Activated CD4-positive, alpha-beta memory T cell treated with anti-CD3 and anti-CD28 coated beads for 36 hours (primary cell): ENCODE measurements at regions of chr15 and their contacts with region 1.

Region 1: GRCh38 chr15:58980351-58980939 is 7.0 kb upstream of the RNF111 start:
- DNase-seq: no peak
- H3K4me3 Mint-ChIP-seq: no peak overlapping the region
- H3K27ac Mint-ChIP-seq: peak overlapping the region; percentile 18
- H3K4me1 Mint-ChIP-seq: peaks cover 36% of the 10 kb centered on the region
- H3K27me3 Mint-ChIP-seq: no peaks in the 10 kb centered on the region

Region 2: GRCh38 chr15:58521293-58521991 is 459.0 kb before region 1 on chr15:
- CTCF ChIA-PET with region 1: no interaction called
- POLR2A ChIA-PET with region 1: no interaction called
- intact Hi-C with region 1: no loop called
- DNase-seq: no peak
- H3K4me3 Mint-ChIP-seq: no peak overlapping the region
- H3K27ac Mint-ChIP-seq: no peak overlapping the region
- H3K4me1 Mint-ChIP-seq: peaks cover 14% of the 10 kb centered on the region
- H3K27me3 Mint-ChIP-seq: no peaks in the 10 kb centered on the region

Region 3: DNA sequence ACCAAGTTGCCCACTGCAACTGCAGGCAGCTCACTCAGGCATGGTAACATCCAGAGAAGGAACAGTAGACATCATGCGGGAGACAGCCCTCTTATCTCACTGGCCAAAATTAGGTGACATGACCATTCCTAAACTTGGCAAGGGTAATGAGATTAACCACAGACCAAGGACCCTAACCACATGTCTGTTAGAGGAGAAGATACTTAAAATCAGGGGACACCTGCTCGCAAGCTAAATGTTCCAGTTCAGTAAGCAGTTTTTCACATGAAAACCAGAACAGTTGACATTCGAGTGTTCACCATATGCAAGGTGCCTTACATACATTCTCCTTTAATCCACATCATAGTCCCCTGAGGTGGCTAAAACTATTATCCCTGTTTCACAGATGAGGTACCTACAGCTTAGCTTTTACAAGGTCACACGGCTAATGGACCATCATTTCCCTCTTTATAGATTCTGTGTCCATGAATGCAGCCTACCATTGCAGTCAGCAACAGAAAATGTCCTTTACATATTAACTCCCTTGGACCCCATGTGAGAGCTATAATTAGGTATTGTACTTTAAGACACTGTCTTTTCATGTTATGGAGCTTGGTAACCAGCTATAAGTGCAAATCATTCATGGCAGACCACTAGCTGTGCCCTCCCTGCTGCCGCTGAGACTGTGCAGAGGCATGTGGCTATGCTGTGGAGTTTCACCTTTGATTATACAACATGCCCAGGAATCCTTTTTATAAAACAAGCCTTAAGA is 394.6 kb before region 1 on chr15:
- CTCF ChIA-PET with region 1: no interaction called
- POLR2A ChIA-PET with region 1: no interaction called
- intact Hi-C with region 1: no loop called
- DNase-seq: no peak
- H3K4me3 Mint-ChIP-seq: no peak overlapping the region
- H3K27ac Mint-ChIP-seq: no peak overlapping the region
- H3K4me1 Mint-ChIP-seq: peaks cover 8% of the 10 kb centered on the region
- H3K27me3 Mint-ChIP-seq: peaks cover 11% of the 10 kb centered on the region

Region 4: GRCh38 chr15:58724466-58724865 is 256.0 kb before region 1 on chr15:
- CTCF ChIA-PET with region 1: no interaction called
- POLR2A ChIA-PET with region 1: no interaction called
- intact Hi-C with region 1: no loop called
- DNase-seq: no peak
- H3K4me3 Mint-ChIP-seq: no peak overlapping the region
- H3K27ac Mint-ChIP-seq: no peak overlapping the region
- H3K4me1 Mint-ChIP-seq: peaks cover 22% of the 10 kb centered on the region
- H3K27me3 Mint-ChIP-seq: no peaks in the 10 kb centered on the region

Region 5: DNA sequence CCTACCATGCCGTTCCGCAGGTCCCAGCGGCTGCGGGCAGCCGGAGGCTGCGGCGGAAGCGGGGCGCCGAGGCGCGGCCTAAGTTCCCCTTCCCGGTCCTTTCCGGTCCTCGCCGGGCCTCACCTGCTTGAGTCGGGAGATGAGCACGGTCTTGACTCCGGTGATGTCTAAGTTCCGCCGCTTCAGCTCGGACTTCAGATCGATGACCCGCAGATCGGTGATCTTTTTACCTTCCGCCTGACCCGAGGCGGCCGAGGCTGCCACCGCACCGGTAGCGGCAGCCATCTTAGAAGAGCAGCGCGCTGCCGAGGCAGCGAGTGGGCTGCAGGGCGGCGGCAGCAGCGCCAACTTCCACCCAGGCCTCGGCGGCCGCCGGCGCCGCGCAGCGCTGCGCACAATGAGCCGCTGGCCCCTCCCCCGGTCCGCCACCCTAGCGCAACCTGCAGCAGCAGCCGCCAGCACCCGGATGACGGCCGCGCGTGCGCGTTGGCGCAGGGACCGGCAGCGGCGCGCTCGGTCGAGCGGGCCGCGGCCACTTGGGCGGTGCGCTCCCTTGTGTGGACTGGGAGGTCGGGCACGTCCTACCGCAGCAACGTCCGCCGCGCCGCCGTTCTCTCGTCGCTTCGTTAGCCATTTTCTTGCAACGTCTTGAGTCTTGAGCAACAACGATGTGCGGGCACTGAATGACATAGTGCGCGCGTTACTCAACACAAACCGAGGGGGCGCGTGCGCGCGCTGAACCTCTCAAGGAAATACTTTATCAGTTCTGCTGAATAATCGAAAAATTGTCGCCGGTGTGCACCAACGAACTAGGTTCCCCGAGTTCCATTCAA is 46.9 kb before region 1 on chr15 and contains the start of gene SLTM:
- CTCF ChIA-PET with region 1: interaction called, 4 read pairs
- POLR2A ChIA-PET with region 1: interaction called, 4 read pairs
- intact Hi-C with region 1: loop called (anchors 1 kb)
- DNase-seq: peak; percentile 94
- H3K4me3 Mint-ChIP-seq: peak within 1 kb of the TSS; percentile 96
- H3K27ac Mint-ChIP-seq: peak within 1 kb of the TSS; percentile 99
- H3K4me1 Mint-ChIP-seq: peaks cover 21% of the 10 kb centered on the region
- H3K27me3 Mint-ChIP-seq: no peaks in the 10 kb centered on the region
- total RNA-seq, gene SLTM: 75.7 to 79.2 TPM

Region 6: DNA sequence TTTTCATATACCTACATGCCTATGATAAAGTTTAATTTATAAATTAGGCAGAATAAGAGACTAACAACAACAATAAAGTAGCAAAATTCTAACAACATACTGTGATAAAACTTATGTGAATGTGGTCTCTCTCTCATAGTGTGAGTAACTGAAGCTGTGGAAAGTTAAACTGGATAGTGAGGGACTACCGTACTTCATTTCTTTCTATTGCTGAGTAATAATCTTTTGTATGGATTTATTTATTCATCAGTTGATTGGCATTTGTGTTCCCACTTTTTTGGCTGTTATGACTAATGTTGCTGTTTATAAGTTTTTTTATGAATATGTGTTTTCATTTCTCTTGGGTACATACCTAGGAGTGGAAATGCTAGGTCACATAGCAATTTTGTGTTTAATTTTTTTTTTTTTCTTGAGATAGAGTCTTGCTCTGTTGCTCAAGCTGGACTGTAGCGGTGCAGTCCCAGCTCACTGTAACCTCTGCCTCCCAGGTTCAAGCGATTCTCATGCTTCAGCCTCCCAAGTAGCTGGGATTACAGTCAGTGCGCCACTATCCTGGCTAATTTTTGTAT is 48.0 kb after region 1 on chr15:
- CTCF ChIA-PET with region 1: no interaction called
- POLR2A ChIA-PET with region 1: no interaction called
- intact Hi-C with region 1: loop called (anchors 2 kb)
- DNase-seq: no peak
- H3K4me3 Mint-ChIP-seq: no peak overlapping the region
- H3K27ac Mint-ChIP-seq: no peak overlapping the region
- H3K4me1 Mint-ChIP-seq: peaks cover 37% of the 10 kb centered on the region
- H3K27me3 Mint-ChIP-seq: no peaks in the 10 kb centered on the region

Region 7: DNA sequence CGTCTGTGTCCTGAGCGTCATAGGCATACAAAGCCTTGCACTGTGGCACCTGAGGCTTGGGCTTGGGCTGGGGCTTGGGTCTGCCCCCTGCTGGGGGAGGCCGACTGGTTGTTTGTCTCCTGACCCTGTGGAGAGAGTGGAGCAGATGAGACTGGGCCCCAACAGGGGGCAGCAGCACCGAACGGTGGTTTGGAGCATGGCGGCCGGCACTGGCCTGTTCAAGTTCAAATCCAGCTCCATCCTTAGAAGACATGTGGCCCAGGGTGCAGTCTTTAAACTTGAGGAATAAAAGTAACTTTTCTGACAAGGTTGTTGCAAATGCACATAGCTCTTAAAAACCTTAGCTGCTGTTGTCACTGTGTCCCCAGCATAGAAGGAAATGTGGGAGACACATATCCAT is 157.8 kb after region 1 on chr15:
- CTCF ChIA-PET with region 1: interaction called, 11 read pairs
- POLR2A ChIA-PET with region 1: no interaction called
- intact Hi-C with region 1: no loop called
- DNase-seq: peak; percentile 72
- H3K4me3 Mint-ChIP-seq: no peak overlapping the region
- H3K27ac Mint-ChIP-seq: no peak overlapping the region
- H3K4me1 Mint-ChIP-seq: peaks cover 24% of the 10 kb centered on the region
- H3K27me3 Mint-ChIP-seq: no peaks in the 10 kb centered on the region

Region 8: DNA sequence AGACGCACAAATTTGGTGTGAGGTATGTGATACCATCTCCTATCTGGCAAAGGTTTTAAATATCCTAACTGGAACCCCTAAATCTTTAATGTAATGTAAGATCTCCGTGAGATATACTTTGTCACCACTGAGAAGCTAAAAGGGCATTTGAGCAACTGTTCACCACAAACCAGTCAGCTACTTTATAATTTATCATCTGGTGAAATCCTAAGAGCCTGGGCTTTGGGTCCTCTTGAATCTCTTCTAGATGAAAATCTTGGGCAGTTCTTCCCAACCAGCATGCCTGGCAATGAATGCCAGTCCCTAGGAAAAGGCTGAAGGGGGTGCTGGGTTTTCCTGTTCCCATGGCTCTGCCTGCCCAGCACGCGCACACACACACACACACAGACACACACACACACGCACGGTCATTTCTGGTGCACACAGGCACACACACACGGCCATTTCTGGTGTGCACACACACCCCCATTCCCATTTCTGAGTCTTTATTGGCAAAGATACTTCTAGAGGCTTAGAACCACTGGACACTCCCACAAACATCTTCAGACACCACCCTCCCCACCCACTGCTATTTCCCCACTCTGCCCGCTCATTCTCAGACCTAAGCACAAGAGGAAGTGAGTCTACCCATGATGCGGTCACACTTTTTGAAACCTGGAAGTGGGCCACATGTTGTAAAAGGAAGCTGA is 319.6 kb after region 1 on chr15:
- CTCF ChIA-PET with region 1: no interaction called
- POLR2A ChIA-PET with region 1: no interaction called
- intact Hi-C with region 1: loop called (anchors 1 kb)
- DNase-seq: peak; percentile 85
- H3K4me3 Mint-ChIP-seq: peak overlapping the region; percentile 42
- H3K27ac Mint-ChIP-seq: peak overlapping the region; percentile 28
- H3K4me1 Mint-ChIP-seq: peaks cover 39% of the 10 kb centered on the region
- H3K27me3 Mint-ChIP-seq: peaks cover 5% of the 10 kb centered on the region

Region 9: GRCh38 chr15:59528965-59529402 is 548.5 kb after region 1 on chr15:
- CTCF ChIA-PET with region 1: interaction called, 16 read pairs
- POLR2A ChIA-PET with region 1: no interaction called
- intact Hi-C with region 1: loop called (anchors 2 kb)
- DNase-seq: peak; percentile 77
- H3K4me3 Mint-ChIP-seq: no peak overlapping the region
- H3K27ac Mint-ChIP-seq: no peak overlapping the region
- H3K4me1 Mint-ChIP-seq: peaks cover 9% of the 10 kb centered on the region
- H3K27me3 Mint-ChIP-seq: peaks cover 13% of the 10 kb centered on the region